A549 (cell line): ENCODE measurements at regions of chr15 and their contacts with region 1.

Region 1: DNA sequence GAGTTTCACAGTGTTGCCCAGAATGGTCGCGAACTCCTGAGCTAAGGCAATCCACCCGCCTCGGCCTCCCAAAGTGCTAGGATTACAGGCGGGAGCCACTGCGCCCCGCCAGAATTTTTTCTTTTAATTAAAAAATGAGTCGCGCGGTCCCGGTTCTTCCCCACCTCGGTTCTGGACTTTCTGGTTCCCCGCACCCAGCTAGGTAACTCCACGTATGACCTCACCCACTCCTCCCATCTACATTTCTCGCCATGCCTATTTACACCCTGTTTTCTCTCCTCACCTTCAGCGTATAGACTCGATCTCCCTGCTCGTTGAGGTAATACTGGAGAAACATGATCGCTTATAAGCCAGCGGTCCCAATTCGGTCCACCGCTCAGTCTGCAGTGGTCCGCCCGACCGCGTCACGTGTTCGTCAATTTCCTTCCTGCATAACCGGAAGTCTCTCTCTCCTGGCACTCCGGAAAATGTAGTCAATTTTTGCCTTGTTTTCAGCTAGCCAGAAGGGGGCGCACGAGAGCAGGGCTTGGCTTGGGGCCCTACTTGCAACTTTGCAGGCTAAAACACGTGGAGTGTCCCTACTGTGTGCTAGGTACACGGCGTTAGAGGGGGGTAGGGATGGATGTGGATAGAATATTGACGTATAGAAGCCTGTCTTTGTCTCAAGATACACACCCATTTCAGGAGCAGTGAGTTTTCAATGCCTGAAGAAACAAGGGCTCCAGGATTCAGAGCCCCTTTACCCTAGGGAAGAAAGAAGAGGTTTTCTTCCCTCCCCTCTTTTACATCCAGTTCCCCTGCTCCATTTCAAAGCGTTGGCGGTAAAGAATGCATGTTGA is at the starts of genes NOP10 and NUTM1:
- DNase-seq: peak; percentile 83 to 96
- ATAC-seq: peak; percentile 93 to 94
- H3K4me3 ChIP-seq: peak within 1 kb of the TSS; percentile 68
- H3K27ac ChIP-seq: peak within 1 kb of the TSS; percentile 82 to 88
- H3K4me1 ChIP-seq: peaks cover 15% of the 10 kb centered on the region; the same call in 2 of the 3 replicates
- CTCF ChIP-seq: peak; percentile 99
- EP300 ChIP-seq: no peak
- POLR2A ChIP-seq: peak; percentile 96
- RAD21 ChIP-seq: peak; percentile 84 to 87
- polyA plus RNA-seq, gene NOP10: 451 and 688 TPM in 2 replicates
- polyA plus RNA-seq, gene NUTM1: not detected in 2 replicates

Region 2: DNA sequence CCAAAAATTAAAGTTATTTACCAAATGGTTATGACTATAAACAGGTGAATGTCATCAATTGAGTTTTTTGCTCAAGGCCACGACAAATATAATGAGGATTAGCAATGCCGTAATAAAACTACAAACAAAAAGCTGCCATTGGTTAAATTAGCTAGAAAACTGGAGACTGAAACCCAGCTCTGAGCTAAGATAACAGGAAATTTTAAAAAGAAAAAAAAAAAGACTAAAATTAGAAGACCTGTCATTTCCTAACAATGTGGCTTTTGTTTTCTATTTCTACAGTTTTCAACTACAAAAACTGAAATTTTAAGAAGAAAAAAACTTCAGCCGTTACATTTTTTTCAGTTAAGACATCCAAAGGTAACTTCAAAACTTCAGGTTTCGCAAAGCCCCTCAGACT is 15.1 kb before region 1 on chr15:
- CTCF ChIA-PET with region 1: interaction called, 15 read pairs
- POLR2A ChIA-PET with region 1: interaction called, 24 read pairs
- DNase-seq: no peak
- ATAC-seq: no peak
- H3K4me3 ChIP-seq: no peak overlapping the region
- H3K27ac ChIP-seq: no peak overlapping the region
- H3K4me1 ChIP-seq: no peaks in the 10 kb centered on the region
- CTCF ChIP-seq: no peak
- EP300 ChIP-seq: no peak
- POLR2A ChIP-seq: no peak
- RAD21 ChIP-seq: no peak

Region 3: GRCh38 chr15:34358367-34358766 is 15.4 kb after region 1 on chr15:
- CTCF ChIA-PET with region 1: interaction called, 35 read pairs
- POLR2A ChIA-PET with region 1: interaction called, 4 read pairs
- DNase-seq: peak; percentile 56 to 82
- ATAC-seq: peak; percentile 76 to 88; a peak in 5 of 6 replicates
- H3K4me3 ChIP-seq: no peak overlapping the region
- H3K27ac ChIP-seq: no peak overlapping the region
- H3K4me1 ChIP-seq: peaks cover 8% of the 10 kb centered on the region; the same call in 2 of the 3 replicates
- CTCF ChIP-seq: peak; percentile 35; the same call in 1 of the 3 replicates
- EP300 ChIP-seq: no peak
- POLR2A ChIP-seq: no peak
- RAD21 ChIP-seq: 0 out of 5 replicates have a peak, but pooled peaks of 1 of the 2 experiments have one; percentile 15

Region 4: DNA sequence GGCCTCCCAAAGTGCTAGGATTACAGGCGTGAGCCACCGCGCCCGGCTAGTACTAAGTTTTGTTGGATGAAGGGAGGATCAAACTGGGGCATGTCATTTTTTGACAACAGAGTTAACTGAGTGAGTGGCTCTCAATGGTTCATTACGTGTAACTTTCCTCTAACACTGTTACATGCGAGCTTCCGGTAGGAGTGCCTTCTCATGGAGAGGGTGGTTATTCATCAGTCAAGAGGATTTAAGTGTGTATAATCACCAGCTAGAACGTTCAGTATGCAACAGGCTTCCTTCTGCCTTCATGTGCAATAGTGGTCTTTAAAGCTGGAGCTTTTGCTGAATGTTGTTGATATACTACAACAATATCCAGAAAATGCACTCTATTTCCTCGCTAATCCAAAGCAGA is 113.7 kb after region 1 on chr15:
- CTCF ChIA-PET with region 1: no interaction called
- POLR2A ChIA-PET with region 1: no interaction called
- DNase-seq: no peak
- ATAC-seq: no peak
- H3K4me3 ChIP-seq: no peak overlapping the region
- H3K27ac ChIP-seq: no peak overlapping the region
- H3K4me1 ChIP-seq: no peaks in the 10 kb centered on the region
- CTCF ChIP-seq: no peak
- EP300 ChIP-seq: no peak
- POLR2A ChIP-seq: no peak
- RAD21 ChIP-seq: no peak